GM12878 (cell line): ENCODE measurements at regions of chr2 and their contacts with region 1.

Region 1: GRCh38 chr2:74206180-74206688 is 7.8 kb downstream of the MTHFD2 start:
- DNase-seq: peak; percentile 61
- ATAC-seq: peak; percentile 87
- H3K4me3 ChIP-seq: peak overlapping the region; percentile 11; the same call in 1 of the 2 replicates
- H3K27ac ChIP-seq: peak overlapping the region; percentile 26
- H3K4me1 ChIP-seq: peaks cover 24% of the 10 kb centered on the region
- H3K27me3 ChIP-seq: no peaks in the 10 kb centered on the region
- CTCF ChIP-seq: no peak
- EP300 ChIP-seq: 0 out of 4 replicates have a peak, but pooled peaks have one; percentile 48 to 49
- POLR2A ChIP-seq: peak; percentile 65
- RAD21 ChIP-seq: peak; percentile 16; the same call in 1 of the 2 replicates

Region 2: GRCh38 chr2:74186038-74186437 is 20.2 kb before region 1 on chr2:
- CTCF ChIA-PET with region 1: interaction called, 90 read pairs
- POLR2A ChIA-PET with region 1: interaction called, 83 read pairs
- RAD21 ChIA-PET with region 1: interaction called, 5 read pairs
- SMC1A ChIA-PET with region 1: interaction called, 12 read pairs
- in situ Hi-C with region 1: no loop called
- intact Hi-C with region 1: no loop called
- DNase-seq: peak; percentile 98
- ATAC-seq: peak; percentile 87
- H3K4me3 ChIP-seq: no peak overlapping the region
- H3K27ac ChIP-seq: peak overlapping the region; percentile 97
- H3K4me1 ChIP-seq: peaks cover 45% of the 10 kb centered on the region
- H3K27me3 ChIP-seq: no peaks in the 10 kb centered on the region
- CTCF ChIP-seq: no peak
- EP300 ChIP-seq: peak; percentile 67 to 79
- POLR2A ChIP-seq: no peak
- RAD21 ChIP-seq: no peak

Region 3: DNA sequence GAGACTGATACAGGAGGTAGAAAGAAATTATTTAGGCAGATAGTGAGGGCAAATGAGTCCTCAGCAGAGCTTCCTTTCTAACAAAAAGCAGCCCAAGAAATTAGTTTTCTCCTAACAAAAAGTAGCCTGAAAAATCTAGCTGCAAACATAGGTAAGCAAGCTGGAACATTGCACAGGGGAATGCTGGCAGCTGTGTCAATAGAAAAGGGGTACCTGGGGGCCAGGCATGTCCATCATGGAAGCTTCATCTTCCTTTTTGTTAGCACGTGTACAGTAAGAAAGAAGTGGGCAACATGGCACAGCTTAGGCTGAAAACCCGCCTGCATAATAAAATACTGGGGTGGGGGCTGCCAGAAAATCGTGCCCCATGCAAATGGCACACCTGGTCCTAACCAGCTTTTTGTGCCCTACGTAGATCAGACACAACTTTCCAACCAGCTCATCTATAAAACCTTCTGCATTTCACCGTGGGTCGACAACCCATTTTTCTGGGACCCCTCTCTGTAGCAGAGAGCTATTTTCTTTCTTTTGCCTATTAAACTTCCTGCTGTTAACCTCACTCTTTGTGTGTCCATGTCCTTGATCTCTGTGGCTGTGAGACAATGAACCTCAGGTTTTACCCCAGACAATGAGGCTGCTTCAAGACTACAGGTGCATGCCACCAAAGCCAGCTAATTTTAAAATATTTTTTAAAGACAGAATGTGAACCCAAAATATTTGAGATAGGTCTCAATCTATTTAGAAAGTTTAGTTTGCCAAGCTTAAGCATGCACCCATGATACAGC is 14.4 kb before region 1 on chr2:
- CTCF ChIA-PET with region 1: interaction called, 4 read pairs
- POLR2A ChIA-PET with region 1: interaction called, 83 read pairs
- RAD21 ChIA-PET with region 1: interaction called, 4 read pairs
- SMC1A ChIA-PET with region 1: interaction called, 8 read pairs
- in situ Hi-C with region 1: no loop called
- intact Hi-C with region 1: no loop called
- DNase-seq: no peak
- ATAC-seq: no peak
- H3K4me3 ChIP-seq: no peak overlapping the region
- H3K27ac ChIP-seq: no peak overlapping the region
- H3K4me1 ChIP-seq: peaks cover 9% of the 10 kb centered on the region
- H3K27me3 ChIP-seq: no peaks in the 10 kb centered on the region
- CTCF ChIP-seq: no peak
- EP300 ChIP-seq: no peak
- POLR2A ChIP-seq: no peak
- RAD21 ChIP-seq: no peak